Pancreas (tissue), 10 donors: ENCODE measurements at regions of chr6 and their contacts with region 1.

Region 1: GRCh38 chr6:134174672-134175198 is 122.3 kb upstream of the SLC2A12 start:
- DNase-seq: peak; percentile 92 to 99 (median 96)
- ATAC-seq: peak; percentile 68 to 85 (median 80)
- H3K4me3 ChIP-seq: peak overlapping the region; percentile 69 to 97 (median 80)
- H3K27ac ChIP-seq: peak overlapping the region; percentile 95 to 99 (median 99)
- H3K4me1 ChIP-seq: peaks cover 12 to 14% (median 12%) of the 10 kb centered on the region in 3 donors
- H3K27me3 ChIP-seq: no peaks in the 10 kb centered on the region
- CTCF ChIP-seq: no peak

Region 2: DNA sequence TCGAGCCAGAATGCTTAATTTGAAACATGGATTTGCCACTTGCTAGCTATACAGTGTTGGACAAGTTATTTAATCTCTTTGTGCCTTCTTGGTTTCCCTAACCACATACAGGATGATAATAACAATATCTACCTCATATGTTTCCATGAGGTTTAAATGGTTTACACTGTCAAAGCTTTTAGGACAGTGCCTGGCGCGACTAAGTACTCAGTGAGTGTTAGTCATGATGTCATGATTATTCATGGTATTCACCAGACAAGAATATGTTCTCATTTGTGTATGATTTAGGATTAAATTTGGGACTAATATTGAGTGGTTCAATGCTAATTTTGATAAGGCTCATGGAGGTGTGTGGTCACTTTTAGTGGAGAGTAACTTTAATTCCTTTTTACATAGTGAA is 766.2 kb before region 1 on chr6:
- intact Hi-C with region 1: no loop called
- DNase-seq: no peak
- ATAC-seq: no peak
- H3K4me3 ChIP-seq: no peak overlapping the region
- H3K27ac ChIP-seq: no peak overlapping the region
- H3K4me1 ChIP-seq: no peaks in the 10 kb centered on the region
- H3K27me3 ChIP-seq: no peaks in the 10 kb centered on the region
- CTCF ChIP-seq: no peak

Region 3: GRCh38 chr6:134258849-134259306 is 84.1 kb after region 1 on chr6:
- intact Hi-C with region 1: loop called in 1 of 3 experiments (anchors 5 kb)
- DNase-seq: peak in 3 of 6 donors; percentile 42 to 53 (median 49)
- ATAC-seq: peak; percentile 85 to 92 (median 86)
- H3K4me3 ChIP-seq: no peak overlapping the region
- H3K27ac ChIP-seq: peak overlapping the region in 2 of 4 donors; percentile 34 to 79
- H3K4me1 ChIP-seq: peaks cover 3 to 19% (median 5%) of the 10 kb centered on the region in 3 donors
- H3K27me3 ChIP-seq: no peaks in the 10 kb centered on the region
- CTCF ChIP-seq: no peak

Region 4: DNA sequence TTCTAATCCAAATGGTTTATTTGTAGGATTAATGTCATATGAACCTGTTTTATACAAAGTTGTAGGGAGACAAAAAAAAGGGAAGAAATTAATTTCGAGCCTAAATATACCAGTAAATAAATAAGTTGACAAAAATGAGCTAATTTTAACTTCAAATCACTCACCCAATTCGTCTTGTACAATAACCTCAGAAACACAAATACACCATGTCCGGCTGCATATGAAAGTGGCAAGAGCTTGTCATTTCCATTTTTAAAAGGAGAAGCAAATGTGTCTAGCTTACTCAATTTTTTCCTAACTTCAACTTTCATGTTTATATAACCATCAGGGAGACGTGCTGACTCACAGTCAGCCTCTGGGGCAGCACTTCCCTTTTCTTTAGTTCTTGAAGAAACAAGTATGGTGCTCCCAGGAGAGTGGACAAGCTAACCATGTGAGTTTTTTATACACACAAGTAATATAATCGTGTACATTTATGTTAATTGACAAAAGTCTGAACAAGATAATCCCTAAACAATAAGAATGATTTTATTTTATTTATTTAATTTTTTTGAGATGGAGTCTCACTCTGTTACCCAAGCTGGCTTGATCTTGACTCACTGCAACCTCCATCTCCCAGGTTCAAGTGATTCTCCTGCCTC is 198.7 kb after region 1 on chr6:
- intact Hi-C with region 1: loop called in 1 of 3 experiments (anchors 10 kb)
- DNase-seq: peak in 1 of 6 donors; percentile 48
- ATAC-seq: peak in 3 of 4 donors; percentile 47 to 91 (median 86)
- H3K4me3 ChIP-seq: no peak overlapping the region
- H3K27ac ChIP-seq: peak overlapping the region in 2 of 4 donors; percentile 38 to 58
- H3K4me1 ChIP-seq: peaks cover 0 to 9% (median 6%) of the 10 kb centered on the region in 3 donors
- H3K27me3 ChIP-seq: no peaks in the 10 kb centered on the region
- CTCF ChIP-seq: no peak

Region 5: DNA sequence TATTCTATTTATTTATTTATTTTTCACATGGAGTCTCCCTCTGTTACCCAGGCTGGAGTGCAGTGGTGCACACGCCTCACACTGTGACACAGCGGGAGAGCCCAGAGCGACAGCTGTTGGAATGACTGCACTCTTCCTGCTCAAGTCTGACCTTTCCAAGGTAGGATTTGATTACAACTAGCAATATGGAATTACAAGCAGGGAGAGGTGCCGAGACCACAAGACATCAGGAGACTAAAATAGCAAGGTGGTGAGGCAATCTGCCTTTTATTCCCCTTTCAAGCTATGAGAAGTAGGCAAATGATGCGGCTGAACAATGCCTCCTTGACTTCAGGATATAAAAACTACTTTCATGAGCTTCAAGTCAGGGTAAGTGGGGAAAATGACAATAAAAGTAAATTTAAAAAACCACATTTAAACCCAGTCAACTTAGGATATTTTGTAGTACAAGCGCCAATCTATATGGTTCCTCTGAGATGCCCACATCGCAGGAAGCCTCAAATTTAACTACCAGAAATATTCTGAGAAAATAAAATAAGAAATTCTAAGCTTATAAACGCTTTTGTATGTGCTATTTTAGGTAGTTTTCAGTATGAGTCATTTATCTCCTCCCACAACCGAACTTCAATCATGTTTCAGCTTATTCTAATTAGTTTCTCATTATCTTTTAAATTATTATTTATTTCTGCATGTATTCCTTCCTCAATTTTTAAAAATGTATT is 290.1 kb after region 1 on chr6:
- intact Hi-C with region 1: loop called in 1 of 3 experiments (anchors 10 kb)
- DNase-seq: no peak
- ATAC-seq: no peak
- H3K4me3 ChIP-seq: no peak overlapping the region
- H3K27ac ChIP-seq: no peak overlapping the region
- H3K4me1 ChIP-seq: peaks cover 31 to 38% (median 32%) of the 10 kb centered on the region in 3 donors
- H3K27me3 ChIP-seq: no peaks in the 10 kb centered on the region
- CTCF ChIP-seq: no peak

Region 6: GRCh38 chr6:134640975-134641429 is 466.3 kb after region 1 on chr6:
- intact Hi-C with region 1: loop called in 2 of 3 experiments (anchors 5 to 10 kb)
- DNase-seq: peak; percentile 65 to 85 (median 74)
- ATAC-seq: peak; percentile 86 to 97 (median 95)
- H3K4me3 ChIP-seq: no peak overlapping the region
- H3K27ac ChIP-seq: no peak overlapping the region
- H3K4me1 ChIP-seq: peaks cover 0 to 9% (median 0%) of the 10 kb centered on the region in 3 donors
- H3K27me3 ChIP-seq: no peaks in the 10 kb centered on the region
- CTCF ChIP-seq: peak; percentile 84 to 93 (median 88)

Region 7: GRCh38 chr6:134822920-134823709 is 648.4 kb after region 1 on chr6:
- intact Hi-C with region 1: loop called in 1 of 3 experiments (anchors 1 kb)
- DNase-seq: peak in 4 of 6 donors; percentile 29 to 62 (median 36)
- ATAC-seq: peak; percentile 94 to 96 (median 94)
- H3K4me3 ChIP-seq: no peak overlapping the region
- H3K27ac ChIP-seq: no peak overlapping the region
- H3K4me1 ChIP-seq: peaks cover 0 to 6% (median 4%) of the 10 kb centered on the region in 3 donors
- H3K27me3 ChIP-seq: no peaks in the 10 kb centered on the region
- CTCF ChIP-seq: peak; percentile 56 to 82 (median 78)